OCI-LY7 (cell line): ENCODE measurements at regions of chr19 and their contacts with region 1.

Region 1: GRCh38 chr19:39187559-39187957 is 9.2 kb upstream of the NCCRP1 start:
- DNase-seq: no peak
- H3K4me3 ChIP-seq: no peak overlapping the region
- H3K27ac ChIP-seq: no peak overlapping the region
- H3K4me1 ChIP-seq: no peaks in the 10 kb centered on the region
- CTCF ChIP-seq: peak; percentile 47; the same call in 1 of the 2 replicates

Region 2: DNA sequence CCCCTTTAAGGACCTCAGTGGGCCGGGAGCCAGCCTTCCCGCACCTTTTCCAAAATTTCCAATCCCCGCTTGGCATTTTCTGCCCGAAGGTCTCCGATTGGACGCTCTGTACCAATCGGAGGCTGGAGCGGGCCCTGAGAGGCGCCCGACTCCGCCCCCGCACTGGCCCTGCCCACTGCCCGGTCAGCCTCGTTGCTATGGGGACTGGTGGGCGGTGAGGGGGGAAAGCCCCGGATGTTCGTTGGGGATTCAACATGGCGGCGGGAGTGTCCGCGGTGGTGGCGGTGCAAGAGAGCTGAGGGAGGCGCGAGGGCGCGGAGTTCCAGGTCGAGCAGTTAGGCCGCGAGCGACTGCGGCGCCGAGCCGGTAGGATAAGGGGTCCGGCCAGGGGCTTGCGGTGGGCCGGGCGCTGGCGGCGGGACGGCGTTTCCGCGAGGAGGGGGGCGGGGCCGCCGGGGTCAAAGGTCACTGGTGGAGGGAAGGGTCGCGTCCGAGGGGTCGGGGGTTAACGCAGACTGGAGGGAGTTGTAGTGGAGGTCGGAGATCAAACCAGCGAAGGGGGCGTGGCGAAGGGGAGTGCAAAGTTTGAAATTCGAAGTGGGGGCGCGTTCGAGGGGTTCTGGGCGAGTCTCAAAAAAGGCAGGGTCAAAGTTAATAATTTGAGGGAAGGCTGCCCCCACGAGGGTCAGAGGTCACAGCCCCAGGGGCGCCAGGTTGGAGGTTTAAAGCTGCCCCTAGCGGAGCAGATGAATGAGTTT is 61.8 kb before region 1 on chr19 and contains the start of gene PAK4:
- CTCF ChIA-PET with region 1: no interaction called
- POLR2A ChIA-PET with region 1: interaction called, 4 read pairs
- intact Hi-C with region 1: loop called (anchors 1 kb)
- DNase-seq: peak; percentile 98
- H3K4me3 ChIP-seq: peak within 1 kb of the TSS; percentile 77
- H3K27ac ChIP-seq: peak within 1 kb of the TSS; percentile 55
- H3K4me1 ChIP-seq: peaks cover 20% of the 10 kb centered on the region
- CTCF ChIP-seq: no peak
- total RNA-seq, gene PAK4: 7.8 and 8.1 TPM in 2 replicates

Region 3: DNA sequence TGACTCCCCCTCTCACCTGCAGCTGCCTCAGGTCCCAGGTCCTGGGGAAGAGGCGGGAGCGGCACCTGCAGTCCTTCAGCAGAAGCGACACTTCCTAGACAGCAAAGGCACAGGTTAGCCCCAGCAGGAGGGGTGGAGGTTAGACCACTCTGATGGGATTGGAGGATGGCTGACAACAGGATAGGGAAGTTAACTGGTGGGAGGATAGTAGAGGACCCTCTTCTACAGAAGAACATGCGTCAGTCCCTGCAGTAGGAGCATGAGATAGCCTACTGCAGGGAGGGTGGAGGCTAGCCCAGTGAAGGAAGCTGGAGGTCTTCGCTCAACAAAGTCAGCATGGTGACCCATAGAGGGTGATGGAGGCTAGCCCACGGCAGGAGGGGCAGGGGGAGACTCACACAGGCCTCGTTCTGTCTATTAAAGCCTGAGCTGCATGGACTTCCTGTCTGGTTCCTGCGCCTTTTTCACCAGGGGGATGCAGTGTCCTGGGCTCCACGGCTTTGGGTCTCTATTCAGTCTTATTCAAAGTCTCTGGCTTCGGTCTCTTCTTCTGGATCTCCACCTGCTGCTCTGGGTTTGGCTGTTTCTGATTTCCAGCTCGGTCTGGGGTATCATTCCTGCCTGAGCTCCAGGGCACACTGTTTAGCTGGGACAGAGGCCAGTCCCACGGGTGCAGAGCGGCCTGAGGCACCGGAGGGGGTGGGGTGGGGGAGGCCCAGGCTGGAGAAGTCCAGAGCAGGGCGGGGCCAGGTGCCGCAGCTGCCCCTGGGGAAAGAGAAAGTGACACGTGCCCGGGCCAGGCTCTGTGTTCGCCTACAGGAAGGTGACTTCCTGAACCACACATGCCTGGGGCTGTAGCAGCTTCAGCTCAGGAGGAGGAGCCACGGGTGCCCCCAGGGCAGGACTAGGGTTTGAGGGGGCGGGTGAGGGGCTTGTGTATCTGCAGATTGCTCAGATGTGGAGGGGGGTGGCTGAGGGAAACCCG is 49.9 kb after region 1 on chr19:
- CTCF ChIA-PET with region 1: no interaction called
- POLR2A ChIA-PET with region 1: no interaction called
- intact Hi-C with region 1: no loop called
- DNase-seq: peak; percentile 81
- H3K4me3 ChIP-seq: peak overlapping the region; percentile 26
- H3K27ac ChIP-seq: no peak overlapping the region
- H3K4me1 ChIP-seq: peaks cover 12% of the 10 kb centered on the region
- CTCF ChIP-seq: no peak